Gastrocnemius medialis (tissue), 4 donors: ENCODE measurements at regions of chr2 and their contacts with region 1.

Region 1: GRCh38 chr2:73926493-73927338 is at the start of gene DGUOK:
- DNase-seq: peak; percentile 96 to 97
- ATAC-seq: peak; percentile 100
- H3K4me3 ChIP-seq: peak within 1 kb of the TSS; percentile 69 to 91 (median 82)
- H3K27ac ChIP-seq: peak within 1 kb of the TSS; percentile 82 to 93 (median 91)
- H3K4me1 ChIP-seq: peaks cover 15 to 17% of the 10 kb centered on the region in 2 donors
- H3K27me3 ChIP-seq: peaks cover 0 to under 1% (median 0%) of the 10 kb centered on the region in 3 donors
- CTCF ChIP-seq: no peak
- POLR2A ChIP-seq: peak; percentile 82 to 90
- total RNA-seq, gene DGUOK: 10.2 to 25.2 (median 20.3) TPM

Region 2: DNA sequence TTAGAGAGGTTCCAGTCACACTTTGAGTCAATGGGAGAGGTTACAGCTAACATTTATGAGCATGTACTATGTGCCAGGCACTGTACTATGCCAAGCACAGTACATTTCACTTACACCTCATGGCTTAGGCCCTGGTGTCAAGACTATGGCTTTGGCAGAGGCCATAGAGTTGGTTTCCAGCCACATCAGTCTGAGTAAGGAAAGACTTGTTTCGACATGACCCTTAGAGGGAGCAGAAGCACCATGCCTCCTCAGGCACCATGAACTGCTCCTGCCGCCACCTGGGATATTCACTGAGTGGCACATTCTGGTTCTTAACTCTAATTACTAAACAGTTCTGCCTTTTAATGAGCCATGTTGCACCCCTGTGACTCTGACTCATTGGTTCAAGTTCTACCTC is 12.7 kb after region 1 on chr2:
- in situ Hi-C with region 1: no loop called
- intact Hi-C with region 1: no loop called
- DNase-seq: peak in 1 of 2 donors; percentile 50
- ATAC-seq: peak; percentile 79 to 93
- H3K4me3 ChIP-seq: no peak overlapping the region
- H3K27ac ChIP-seq: peak overlapping the region in 1 of 4 donors; percentile 21
- H3K4me1 ChIP-seq: peaks cover 4 to 8% of the 10 kb centered on the region in 2 donors
- H3K27me3 ChIP-seq: no peaks in the 10 kb centered on the region
- CTCF ChIP-seq: peak in 1 of 5 experiments; percentile 15
- POLR2A ChIP-seq: no peak

Region 3: GRCh38 chr2:73985308-73986084 is 58.8 kb after region 1 on chr2:
- in situ Hi-C with region 1: no loop called
- intact Hi-C with region 1: loop called (anchors 2 kb)
- DNase-seq: no peak
- ATAC-seq: peak; percentile 7 to 12
- H3K4me3 ChIP-seq: peak overlapping the region; percentile 58 to 71 (median 62)
- H3K27ac ChIP-seq: peak overlapping the region in 3 of 4 donors; percentile 25 to 62 (median 53)
- H3K4me1 ChIP-seq: peaks cover 41 to 51% of the 10 kb centered on the region in 2 donors
- H3K27me3 ChIP-seq: no peaks in the 10 kb centered on the region
- CTCF ChIP-seq: no peak
- POLR2A ChIP-seq: peak in 1 of 2 donors; percentile 23

Region 4: GRCh38 chr2:73995810-73996209 is 69.1 kb after region 1 on chr2:
- in situ Hi-C with region 1: no loop called
- intact Hi-C with region 1: no loop called
- DNase-seq: no peak
- ATAC-seq: no peak
- H3K4me3 ChIP-seq: no peak overlapping the region
- H3K27ac ChIP-seq: no peak overlapping the region
- H3K4me1 ChIP-seq: no peaks in the 10 kb centered on the region
- H3K27me3 ChIP-seq: no peaks in the 10 kb centered on the region
- CTCF ChIP-seq: no peak
- POLR2A ChIP-seq: no peak

Region 5: DNA sequence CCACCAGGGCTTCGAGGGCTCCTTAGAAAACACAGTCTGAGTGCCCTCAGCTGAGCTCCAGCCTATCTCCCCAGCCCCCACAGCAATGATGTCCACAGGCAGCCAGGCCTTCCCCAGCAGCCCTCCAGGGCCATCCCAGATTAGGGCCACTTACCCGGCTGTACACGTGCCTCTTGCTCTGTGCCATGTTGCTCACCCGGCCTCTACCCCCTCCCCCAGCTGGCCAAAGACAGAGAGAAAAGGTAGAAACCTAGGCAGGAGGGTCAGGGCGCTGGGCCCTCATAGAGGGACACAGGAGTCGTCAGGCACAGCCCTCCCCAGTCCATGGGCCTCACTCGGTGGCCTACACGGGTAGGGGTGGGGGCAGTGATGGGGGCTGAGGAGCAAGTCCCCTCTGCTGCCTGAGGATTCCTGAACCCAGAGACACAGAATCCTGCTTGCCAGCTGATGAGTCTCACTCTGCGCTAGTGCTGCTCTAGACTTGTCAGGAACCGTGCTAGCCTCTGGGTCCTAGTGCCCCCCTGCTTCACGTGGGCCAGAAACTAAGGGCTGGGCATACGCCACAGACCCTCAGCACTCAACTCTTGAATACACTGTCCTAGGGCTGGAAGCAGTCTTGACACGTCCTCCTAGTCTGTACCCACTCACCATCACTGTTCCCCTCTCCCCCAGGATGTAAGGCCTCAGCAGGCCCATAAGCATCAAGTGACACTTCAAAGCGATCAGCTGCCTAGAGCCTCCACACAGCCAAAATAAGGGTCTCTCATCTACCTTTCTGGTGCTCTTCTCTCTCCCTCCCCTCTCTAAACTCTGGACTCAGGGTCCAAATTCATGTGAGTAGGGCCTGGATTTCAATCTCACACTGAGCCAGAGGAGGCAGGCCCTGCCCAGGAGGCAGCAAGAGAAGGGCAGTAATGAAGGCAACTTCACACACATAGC is 453.4 kb after region 1 on chr2 and contains the start of gene DCTN1:
- in situ Hi-C with region 1: no loop called
- intact Hi-C with region 1: loop called (anchors 10 kb)
- DNase-seq: peak in 1 of 2 donors; percentile 23
- ATAC-seq: peak; percentile 68 to 70
- H3K4me3 ChIP-seq: peak within 1 kb of the TSS; percentile 41 to 53 (median 50)
- H3K27ac ChIP-seq: peak within 1 kb of the TSS in 3 of 4 donors; percentile 22 to 40 (median 29)
- H3K4me1 ChIP-seq: peaks cover 47 to 49% of the 10 kb centered on the region in 2 donors
- H3K27me3 ChIP-seq: no peaks in the 10 kb centered on the region
- CTCF ChIP-seq: no peak
- POLR2A ChIP-seq: no peak
- total RNA-seq, gene DCTN1: 89.8 to 127 (median 103) TPM

Region 6: GRCh38 chr2:74566754-74567085 is 640.0 kb after region 1 on chr2:
- in situ Hi-C with region 1: no loop called
- intact Hi-C with region 1: no loop called
- DNase-seq: no peak
- ATAC-seq: no peak
- H3K4me3 ChIP-seq: no peak overlapping the region
- H3K27ac ChIP-seq: no peak overlapping the region
- H3K4me1 ChIP-seq: no peaks in the 10 kb centered on the region
- H3K27me3 ChIP-seq: peaks cover 0 to 4% (median 0%) of the 10 kb centered on the region in 3 donors
- CTCF ChIP-seq: no peak
- POLR2A ChIP-seq: no peak